ENCODE measurements at regions of chr5 and their contacts with region 1.

Region 1: DNA sequence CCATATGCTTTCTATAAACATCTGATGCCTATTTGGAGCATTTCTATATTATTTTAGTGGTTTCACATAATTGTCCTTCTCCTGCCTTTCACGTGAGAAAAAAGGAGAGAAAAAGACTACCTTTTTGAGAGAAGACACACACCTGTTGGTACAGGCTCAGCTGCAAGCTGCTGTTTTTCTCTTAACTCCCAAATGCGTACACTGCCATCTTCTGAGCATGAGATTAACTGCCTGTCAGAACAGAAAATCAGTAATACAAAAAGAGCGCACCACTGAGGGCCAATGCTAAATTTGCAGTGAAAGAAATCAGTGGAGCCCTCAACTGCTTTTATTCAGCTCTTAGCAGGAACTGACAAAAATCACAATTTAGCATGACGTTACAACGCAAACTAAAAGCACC is 54.9 kb downstream of the WDR41 start:
- DNase-seq: no peak
- CTCF ChIP-seq: peak; percentile 22

Region 2: DNA sequence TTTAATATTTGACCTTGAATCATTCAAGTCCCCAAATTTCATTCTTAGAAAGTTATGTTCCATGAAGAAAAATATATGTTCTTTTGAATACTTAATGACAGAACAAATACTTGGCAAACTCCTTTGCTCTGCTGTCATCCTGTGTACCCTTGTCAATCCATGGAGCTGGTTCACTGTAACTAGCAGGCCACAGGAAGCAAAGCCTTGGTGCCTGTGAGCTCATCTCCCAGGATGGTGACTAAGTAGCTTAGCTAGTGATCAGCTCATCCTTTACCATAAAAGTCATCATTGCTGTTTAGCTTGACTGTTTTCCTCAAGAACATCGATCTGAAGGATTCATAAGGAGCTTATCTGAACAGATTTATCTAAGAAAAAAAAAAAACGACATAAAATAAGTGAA is 10.5 kb before region 1 on chr5:
- CTCF ChIA-PET with region 1: interaction called, 12 read pairs
- POLR2A ChIA-PET with region 1: no interaction called
- DNase-seq: no peak
- CTCF ChIP-seq: no peak

Measured in GM10248 (cell line).